ENCODE measurements at regions of chr3 and their contacts with region 1.

Region 1: GRCh38 chr3:56988458-56989168 is 71.9 kb upstream of the SPATA12 start:
- DNase-seq: peak; percentile 56 to 96 (median 87)

Region 2: GRCh38 chr3:56702490-56703315 is 285.9 kb before region 1 on chr3:
- intact Hi-C with region 1: loop called (anchors 1 kb)
- DNase-seq: peak in 3 of 10 donors; percentile 21 to 50 (median 26)

Region 3: DNA sequence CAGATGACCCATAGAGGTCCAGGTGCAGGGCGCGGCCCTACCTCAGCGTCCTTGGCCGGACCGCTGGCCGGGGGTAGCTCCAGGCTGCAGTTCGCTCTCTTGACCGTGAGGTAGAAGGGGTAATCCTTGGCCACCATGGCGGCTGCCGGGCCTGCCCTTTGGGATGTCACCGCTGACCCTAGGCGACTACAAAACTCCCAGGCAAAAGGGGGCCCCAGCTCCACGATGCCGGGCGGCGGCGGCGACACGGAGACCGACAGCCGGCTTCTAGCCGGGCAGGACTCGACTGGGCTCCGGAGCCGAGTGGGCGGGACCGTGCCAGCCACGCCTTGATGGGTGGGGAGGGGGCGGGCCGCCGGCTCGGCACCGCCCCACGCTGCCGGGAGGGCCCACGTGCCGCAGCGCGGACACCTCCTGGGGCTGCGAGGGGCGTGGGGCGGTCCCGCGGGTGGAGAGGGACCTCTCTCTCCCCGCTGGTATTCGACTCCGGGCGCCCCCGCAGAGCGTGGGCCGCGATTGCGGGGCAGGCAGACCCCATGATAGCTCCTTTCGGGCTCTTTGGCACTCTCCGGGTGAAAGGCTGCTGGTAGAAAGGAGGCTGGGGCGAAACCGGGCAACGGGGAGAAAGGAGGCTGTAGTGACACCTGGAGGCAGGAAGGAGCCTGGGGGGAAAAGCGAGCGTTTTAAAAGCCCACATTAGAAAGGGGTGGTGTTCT is 186.8 kb before region 1 on chr3 and contains the start of gene ARHGEF3:
- intact Hi-C with region 1: loop called (anchors 2 kb)
- DNase-seq: peak; percentile 81 to 98 (median 91)

Region 4: GRCh38 chr3:56855856-56856512 is 132.6 kb before region 1 on chr3:
- intact Hi-C with region 1: loop called (anchors 5 kb)
- DNase-seq: peak in 9 of 10 donors; percentile 20 to 96 (median 61)

Region 5: GRCh38 chr3:56915966-56916586 is 72.5 kb before region 1 on chr3:
- intact Hi-C with region 1: no loop called
- DNase-seq: no peak

Measured in posterior cingulate gyrus (tissue), 11 donors.